ENCODE measurements at regions of chr2 and their contacts with region 1.

Region 1: DNA sequence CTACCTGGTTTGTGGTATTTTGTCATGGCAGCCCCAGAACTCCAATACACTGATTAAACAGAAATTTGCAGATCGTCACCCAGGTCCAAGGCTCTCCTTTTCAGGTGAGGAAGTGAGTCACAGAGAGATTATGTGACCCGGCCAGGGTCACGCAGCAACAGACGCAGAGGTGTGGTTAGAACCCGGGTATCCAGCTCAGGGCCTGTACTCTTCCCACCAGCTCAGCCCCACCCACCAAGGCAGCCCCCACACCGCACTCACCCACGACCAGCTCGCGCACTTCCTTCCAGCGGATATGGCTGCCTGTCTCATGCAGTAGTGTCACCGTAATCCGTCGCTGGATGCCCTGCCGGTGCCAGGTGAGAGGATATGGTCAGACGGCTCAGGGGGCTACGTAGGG is 48.1 kb downstream of the AQP12A start:
- DNase-seq: no peak
- H3K4me3 ChIP-seq: no peak overlapping the region
- CTCF ChIP-seq: no peak

Region 2: GRCh38 chr2:240796543-240797499 is 57.0 kb after region 1 on chr2:
- in situ Hi-C with region 1: loop called (anchors 5 kb)
- DNase-seq: no peak
- H3K4me3 ChIP-seq: no peak overlapping the region
- CTCF ChIP-seq: no peak

Region 3: GRCh38 chr2:240921251-240921994 is 181.6 kb after region 1 on chr2:
- in situ Hi-C with region 1: no loop called
- DNase-seq: peak; percentile 94
- H3K4me3 ChIP-seq: no peak overlapping the region
- CTCF ChIP-seq: no peak

Region 4: DNA sequence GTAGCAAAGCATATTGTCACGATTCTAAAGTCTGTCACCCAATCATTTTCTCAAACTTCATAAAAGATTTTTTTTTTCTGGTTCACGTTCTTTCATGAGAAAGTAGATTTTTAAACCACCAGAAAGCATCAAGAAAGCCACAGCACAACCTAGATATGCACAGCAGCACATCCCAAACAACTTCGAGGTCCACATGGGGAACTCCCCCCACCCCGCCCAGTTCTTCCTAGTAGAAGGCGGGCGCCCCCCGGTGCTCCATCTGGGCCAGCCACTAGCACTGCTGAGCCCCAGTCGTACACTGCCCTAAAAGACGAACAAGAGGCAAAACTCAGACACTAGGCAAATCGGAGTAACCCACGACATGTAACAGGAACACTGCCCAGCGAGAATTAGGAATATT is 560.2 kb after region 1 on chr2:
- in situ Hi-C with region 1: no loop called
- DNase-seq: no peak
- H3K4me3 ChIP-seq: no peak overlapping the region
- CTCF ChIP-seq: no peak

Region 5: GRCh38 chr2:242034996-242035814 is 1295.4 kb after region 1 on chr2:
- in situ Hi-C with region 1: no loop called
- DNase-seq: no peak
- H3K4me3 ChIP-seq: no peak overlapping the region
- CTCF ChIP-seq: no peak

Measured in astrocyte of the cerebellum (primary cell).